ENCODE measurements at regions of chr7 and their contacts with region 1.

Region 1: GRCh38 chr7:37234928-37235327 is 213.7 kb downstream of the ELMO1 start:
- DNase-seq: no peak
- ATAC-seq: no peak

Region 2: GRCh38 chr7:37201003-37201875 is 33.7 kb before region 1 on chr7:
- intact Hi-C with region 1: no loop called
- DNase-seq: peak; percentile 87
- ATAC-seq: peak; percentile 84

Region 3: DNA sequence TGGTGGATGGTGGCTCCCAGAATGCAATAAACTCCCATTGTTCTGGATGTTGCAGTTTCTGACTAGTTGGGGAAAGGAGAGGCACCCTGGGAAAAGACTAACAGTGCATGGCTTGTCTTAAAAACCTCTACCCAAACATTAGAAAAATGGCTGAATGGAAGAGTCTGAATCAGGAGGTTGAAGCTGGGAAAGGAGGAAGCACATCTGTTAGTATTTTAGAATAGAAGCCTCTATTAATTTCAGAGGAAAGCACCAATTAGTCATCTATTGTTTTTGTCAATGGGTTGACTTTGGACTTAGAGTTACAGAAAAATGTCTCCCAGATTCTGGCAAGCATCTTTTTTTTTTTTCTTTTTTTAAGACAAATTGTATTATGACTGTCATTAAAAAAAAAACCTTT is 269.9 kb after region 1 on chr7:
- intact Hi-C with region 1: loop called (anchors 10 kb)
- DNase-seq: no peak
- ATAC-seq: no peak

Measured in Right ventricle myocardium inferior (tissue), 1 donor.